Activated B cell treated with CpG ODN at 0.5 μM for 24 hours (primary cell): ENCODE measurements at regions of chr5 and their contacts with region 1.

Region 1: DNA sequence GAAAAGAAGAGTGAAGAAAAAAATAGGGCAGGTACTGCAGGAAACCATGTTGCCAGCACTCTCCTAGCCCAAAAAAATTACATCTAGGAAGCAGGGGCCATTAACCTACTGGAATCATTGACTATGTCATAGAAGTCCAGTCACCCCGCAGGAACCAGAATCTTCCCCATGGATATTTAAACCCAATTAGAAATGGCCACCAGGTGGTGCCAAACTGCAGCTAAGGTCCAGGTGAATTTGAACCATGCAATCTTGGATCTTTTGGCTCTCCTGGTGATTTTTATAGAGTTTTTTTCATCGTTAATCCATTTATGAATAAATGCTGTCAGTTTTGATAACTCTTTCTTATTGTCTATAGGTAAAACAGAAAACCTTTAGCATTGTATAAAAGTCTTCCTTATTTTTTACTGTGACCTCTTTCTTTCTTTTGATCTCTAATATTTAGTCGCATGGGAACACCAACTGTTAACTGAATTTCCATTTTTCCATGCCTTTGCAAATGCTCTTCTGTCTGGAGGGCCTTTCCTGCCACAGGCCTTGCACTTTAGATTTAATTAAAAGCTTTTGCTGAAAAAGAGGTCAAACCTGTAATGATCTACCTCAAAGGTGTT is 147.5 kb upstream of the FGF10 start:
- DNase-seq: no peak
- ATAC-seq: no peak
- H3K4me3 Mint-ChIP-seq: no peak overlapping the region
- H3K27ac Mint-ChIP-seq: no peak overlapping the region
- H3K4me1 Mint-ChIP-seq: no peaks in the 10 kb centered on the region
- H3K27me3 Mint-ChIP-seq: no peaks in the 10 kb centered on the region
- CTCF ChIP-seq: no peak

Region 2: DNA sequence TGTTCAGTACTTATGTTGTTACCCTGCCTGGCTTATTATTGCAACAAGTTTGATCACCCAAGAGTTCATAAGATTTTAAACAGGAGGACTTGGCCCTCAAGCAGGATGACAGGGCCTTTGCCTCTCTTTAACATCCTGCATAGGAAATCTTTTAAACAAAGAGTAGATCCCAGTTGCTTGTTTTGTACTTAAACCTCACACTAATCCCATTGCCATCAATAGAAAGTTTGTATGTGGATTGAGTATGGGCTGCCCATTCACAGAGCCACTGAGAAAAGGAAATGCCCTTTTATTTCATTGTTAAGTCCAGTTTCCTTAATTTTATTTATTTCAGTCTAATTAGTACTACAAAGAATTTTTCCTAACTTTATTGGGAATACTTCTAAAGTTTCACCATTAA is 95.3 kb before region 1 on chr5:
- CTCF ChIA-PET with region 1: no interaction called
- POLR2A ChIA-PET with region 1: no interaction called
- intact Hi-C with region 1: no loop called
- DNase-seq: no peak
- ATAC-seq: no peak
- H3K4me3 Mint-ChIP-seq: no peak overlapping the region
- H3K27ac Mint-ChIP-seq: no peak overlapping the region
- H3K4me1 Mint-ChIP-seq: no peaks in the 10 kb centered on the region
- H3K27me3 Mint-ChIP-seq: no peaks in the 10 kb centered on the region
- CTCF ChIP-seq: no peak

Region 3: GRCh38 chr5:44774279-44774880 is 237.6 kb after region 1 on chr5:
- CTCF ChIA-PET with region 1: interaction called, 4 read pairs
- POLR2A ChIA-PET with region 1: no interaction called
- intact Hi-C with region 1: loop called (anchors 1 kb)
- DNase-seq: no peak
- ATAC-seq: no peak
- H3K4me3 Mint-ChIP-seq: no peak overlapping the region
- H3K27ac Mint-ChIP-seq: no peak overlapping the region
- H3K4me1 Mint-ChIP-seq: no peaks in the 10 kb centered on the region
- H3K27me3 Mint-ChIP-seq: peaks cover 4% of the 10 kb centered on the region
- CTCF ChIP-seq: no peak